A673 (cell line): ENCODE measurements at regions of chr18 and their contacts with region 1.

Region 1: GRCh38 chr18:44186001-44186400 is 494.7 kb upstream of the SETBP1 start:
- DNase-seq: peak; percentile 3
- H3K4me3 ChIP-seq: no peak overlapping the region
- H3K27ac ChIP-seq: no peak overlapping the region
- H3K4me1 ChIP-seq: no peaks in the 10 kb centered on the region
- H3K27me3 ChIP-seq: no peaks in the 10 kb centered on the region
- CTCF ChIP-seq: no peak

Region 2: DNA sequence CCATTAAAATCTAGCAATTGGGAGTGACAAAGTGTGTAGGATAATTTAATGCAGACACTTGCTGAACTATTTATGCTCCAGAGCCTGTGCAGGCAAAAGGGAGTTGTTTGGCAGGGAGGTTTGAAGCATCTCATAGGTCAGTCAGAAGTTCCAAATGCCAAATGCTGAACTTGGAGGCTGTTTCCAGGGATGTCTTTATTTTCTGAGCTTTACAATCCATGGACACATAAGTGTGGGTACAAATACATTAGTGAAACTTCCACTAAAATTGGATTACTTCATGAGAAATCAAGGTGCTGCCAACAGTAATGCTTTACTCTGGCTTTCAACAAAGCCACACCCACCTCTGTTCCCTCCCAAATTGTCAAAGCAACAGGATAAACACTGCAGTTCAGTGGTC is 72.6 kb after region 1 on chr18:
- CTCF ChIA-PET with region 1: no interaction called
- POLR2A ChIA-PET with region 1: interaction called, 10 read pairs
- intact Hi-C with region 1: no loop called
- DNase-seq: no peak
- H3K4me3 ChIP-seq: no peak overlapping the region
- H3K27ac ChIP-seq: no peak overlapping the region
- H3K4me1 ChIP-seq: no peaks in the 10 kb centered on the region
- H3K27me3 ChIP-seq: no peaks in the 10 kb centered on the region
- CTCF ChIP-seq: no peak